Activated CD4-positive, alpha-beta memory T cell treated with anti-CD3 and anti-CD28 coated beads, Interleukin-2, amount 10 ng/mL, durations not matched to agents 7 days and 5 days (primary cell): ENCODE measurements at regions of chr14 and their contacts with region 1.

Region 1: GRCh38 chr14:70073924-70074566 is 114.7 kb downstream of the SLC8A3 start:
- DNase-seq: peak; percentile 61
- H3K4me3 Mint-ChIP-seq: no peak overlapping the region
- H3K27ac Mint-ChIP-seq: no peak overlapping the region
- H3K4me1 Mint-ChIP-seq: no peaks in the 10 kb centered on the region
- H3K27me3 Mint-ChIP-seq: peaks cover 23% of the 10 kb centered on the region

Region 2: GRCh38 chr14:69818757-69819191 is 255.3 kb before region 1 on chr14:
- CTCF ChIA-PET with region 1: interaction called, 12 read pairs
- POLR2A ChIA-PET with region 1: no interaction called
- DNase-seq: peak; percentile 50
- H3K4me3 Mint-ChIP-seq: no peak overlapping the region
- H3K27ac Mint-ChIP-seq: no peak overlapping the region
- H3K4me1 Mint-ChIP-seq: peaks cover 2% of the 10 kb centered on the region
- H3K27me3 Mint-ChIP-seq: peaks cover 11% of the 10 kb centered on the region

Region 3: DNA sequence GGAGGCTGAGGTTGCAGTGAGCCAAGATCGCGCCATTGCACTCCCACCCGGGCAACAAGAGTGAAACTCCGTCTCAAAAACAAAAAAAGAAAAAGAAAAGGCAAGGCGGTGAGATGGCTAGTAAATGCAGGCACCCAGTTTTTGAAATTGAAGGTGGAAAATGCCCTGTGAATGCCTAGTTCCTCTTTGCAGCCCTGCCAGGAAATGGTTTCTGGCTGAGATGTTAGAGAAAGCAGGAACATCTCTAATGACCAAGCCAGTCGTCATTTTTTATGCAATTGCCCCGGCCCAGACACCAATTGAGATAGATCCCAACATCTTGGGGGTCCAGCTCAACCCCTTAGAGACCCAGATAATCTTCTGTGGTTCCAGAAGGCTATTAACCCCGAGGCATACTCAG is 97.7 kb after region 1 on chr14:
- CTCF ChIA-PET with region 1: no interaction called
- POLR2A ChIA-PET with region 1: no interaction called
- DNase-seq: no peak
- H3K4me3 Mint-ChIP-seq: no peak overlapping the region
- H3K27ac Mint-ChIP-seq: no peak overlapping the region
- H3K4me1 Mint-ChIP-seq: no peaks in the 10 kb centered on the region
- H3K27me3 Mint-ChIP-seq: peaks cover 2% of the 10 kb centered on the region